A549 (cell line): ENCODE measurements at regions of chr18 and their contacts with region 1.

Region 1: GRCh38 chr18:3230401-3231334 is 10.9 kb upstream of the MYOM1 start:
- DNase-seq: peak in 1 of 2 experiments; percentile 49
- ATAC-seq: 0 out of 6 replicates have a peak, but pooled peaks of 1 of the 2 experiments have one; percentile 33
- H3K4me3 ChIP-seq: no peak overlapping the region
- H3K27ac ChIP-seq: no peak overlapping the region
- H3K4me1 ChIP-seq: no peaks in the 10 kb centered on the region
- CTCF ChIP-seq: no peak
- EP300 ChIP-seq: no peak
- POLR2A ChIP-seq: no peak
- RAD21 ChIP-seq: no peak

Region 2: GRCh38 chr18:3827236-3827875 is 596.7 kb after region 1 on chr18:
- CTCF ChIA-PET with region 1: no interaction called
- POLR2A ChIA-PET with region 1: interaction called, 10 read pairs
- DNase-seq: no peak
- ATAC-seq: no peak
- H3K4me3 ChIP-seq: no peak overlapping the region
- H3K27ac ChIP-seq: peak overlapping the region in 1 of 2 experiments; percentile 8; a peak in 1 of 6 replicates
- H3K4me1 ChIP-seq: 0 out of 3 replicates have a peak, but pooled peaks cover 3% of the 10 kb centered on the region
- CTCF ChIP-seq: no peak
- EP300 ChIP-seq: no peak
- POLR2A ChIP-seq: no peak
- RAD21 ChIP-seq: no peak